B cell (primary cell): ENCODE measurements at regions of chr1 and their contacts with region 1.

Region 1: GRCh38 chr1:235105051-235106043 is 23.3 kb downstream of the TOMM20 start:
- DNase-seq: no peak
- ATAC-seq: no peak
- H3K4me3 ChIP-seq: peak overlapping the region in 2 of 5 experiments; percentile 8 to 33
- H3K4me3 Mint-ChIP-seq: peak overlapping the region; percentile 84
- H3K27ac ChIP-seq: no peak overlapping the region
- H3K27ac Mint-ChIP-seq: peak overlapping the region; percentile 22
- H3K4me1 ChIP-seq: peaks cover 7 to 28% of the 10 kb centered on the region in 2 donors
- H3K4me1 Mint-ChIP-seq: peaks cover 31% of the 10 kb centered on the region
- H3K27me3 ChIP-seq: no peaks in the 10 kb centered on the region
- H3K27me3 Mint-ChIP-seq: no peaks in the 10 kb centered on the region
- CTCF ChIP-seq: no peak

Region 2: GRCh38 chr1:234893725-234894630 is 211.4 kb before region 1 on chr1:
- CTCF ChIA-PET with region 1: no interaction called
- POLR2A ChIA-PET with region 1: no interaction called
- intact Hi-C with region 1: no loop called
- DNase-seq: no peak
- ATAC-seq: no peak
- H3K4me3 ChIP-seq: no peak overlapping the region
- H3K4me3 Mint-ChIP-seq: no peak overlapping the region
- H3K27ac ChIP-seq: no peak overlapping the region
- H3K27ac Mint-ChIP-seq: no peak overlapping the region
- H3K4me1 ChIP-seq: no peaks in the 10 kb centered on the region
- H3K4me1 Mint-ChIP-seq: no peaks in the 10 kb centered on the region
- H3K27me3 ChIP-seq: no peaks in the 10 kb centered on the region
- H3K27me3 Mint-ChIP-seq: no peaks in the 10 kb centered on the region
- CTCF ChIP-seq: no peak

Region 3: DNA sequence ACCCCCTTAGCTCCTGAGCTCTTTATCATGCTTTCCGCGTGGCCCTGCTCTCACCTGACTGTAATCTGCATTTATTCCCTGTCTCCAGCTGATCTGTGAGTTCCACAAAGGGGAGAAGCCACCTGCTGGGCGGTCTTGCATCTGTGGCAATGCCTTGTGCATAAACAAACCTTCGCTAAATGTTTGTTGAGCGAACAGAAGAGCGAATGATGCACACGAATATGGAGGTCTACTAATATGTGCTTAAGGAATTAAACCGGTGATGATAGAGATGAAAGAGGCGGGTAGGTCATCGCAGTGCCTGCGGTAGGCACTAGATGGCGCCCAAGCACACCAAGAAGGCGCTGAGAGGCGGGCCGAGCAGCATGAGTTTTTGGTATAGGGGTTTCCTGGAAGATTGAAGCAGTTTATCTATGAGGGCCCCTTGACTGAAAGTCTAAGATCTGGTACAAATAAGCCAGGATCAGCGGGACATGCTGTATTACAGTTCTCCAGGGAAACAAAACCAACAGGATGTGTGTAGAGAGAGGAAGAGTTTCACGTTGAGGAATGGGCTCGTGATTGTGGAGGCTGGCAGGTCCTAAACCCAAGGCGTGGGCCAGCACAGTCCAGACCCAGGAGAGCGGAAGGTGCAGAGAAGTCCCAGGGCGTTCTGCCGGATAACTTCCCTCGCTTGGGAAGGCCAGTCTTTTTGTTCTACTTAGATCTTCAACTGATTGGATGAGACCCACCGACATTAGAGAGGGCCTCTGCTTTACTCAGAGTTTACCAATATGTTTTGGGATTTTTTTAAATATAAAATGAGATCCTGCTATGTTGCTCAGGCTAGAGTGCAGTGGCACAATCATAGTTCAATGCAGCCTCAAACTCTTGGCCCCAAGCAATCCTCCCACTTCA is 11.4 kb before region 1 on chr1:
- CTCF ChIA-PET with region 1: interaction called, 19 read pairs
- POLR2A ChIA-PET with region 1: no interaction called
- intact Hi-C with region 1: loop called (anchors 1 kb)
- DNase-seq: peak; percentile 84
- ATAC-seq: peak; percentile 99
- H3K4me3 ChIP-seq: no peak overlapping the region
- H3K4me3 Mint-ChIP-seq: no peak overlapping the region
- H3K27ac ChIP-seq: no peak overlapping the region
- H3K27ac Mint-ChIP-seq: peak overlapping the region; percentile 2
- H3K4me1 ChIP-seq: peaks cover 0 to 7% of the 10 kb centered on the region in 2 donors
- H3K4me1 Mint-ChIP-seq: peaks cover 5% of the 10 kb centered on the region
- H3K27me3 ChIP-seq: no peaks in the 10 kb centered on the region
- H3K27me3 Mint-ChIP-seq: peaks cover 5% of the 10 kb centered on the region
- CTCF ChIP-seq: peak; percentile 98